ENCODE measurements at regions of chr7 and their contacts with region 1.

Region 1: GRCh38 chr7:24701261-24702235 is 55.7 kb downstream of the GSDME start:
- DNase-seq: peak in 1 of 2 experiments; percentile 33
- H3K4me3 ChIP-seq: no peak overlapping the region
- H3K27ac ChIP-seq: no peak overlapping the region
- H3K4me1 ChIP-seq: peaks cover under 1 to 11% (median 4%) of the 10 kb centered on the region in 4 experiments; a peak in 5 of 7 replicates
- H3K27me3 ChIP-seq: no peaks in the 10 kb centered on the region
- CTCF ChIP-seq: no peak
- EP300 ChIP-seq: no peak
- POLR2A ChIP-seq: no peak
- RAD21 ChIP-seq: no peak

Region 2: DNA sequence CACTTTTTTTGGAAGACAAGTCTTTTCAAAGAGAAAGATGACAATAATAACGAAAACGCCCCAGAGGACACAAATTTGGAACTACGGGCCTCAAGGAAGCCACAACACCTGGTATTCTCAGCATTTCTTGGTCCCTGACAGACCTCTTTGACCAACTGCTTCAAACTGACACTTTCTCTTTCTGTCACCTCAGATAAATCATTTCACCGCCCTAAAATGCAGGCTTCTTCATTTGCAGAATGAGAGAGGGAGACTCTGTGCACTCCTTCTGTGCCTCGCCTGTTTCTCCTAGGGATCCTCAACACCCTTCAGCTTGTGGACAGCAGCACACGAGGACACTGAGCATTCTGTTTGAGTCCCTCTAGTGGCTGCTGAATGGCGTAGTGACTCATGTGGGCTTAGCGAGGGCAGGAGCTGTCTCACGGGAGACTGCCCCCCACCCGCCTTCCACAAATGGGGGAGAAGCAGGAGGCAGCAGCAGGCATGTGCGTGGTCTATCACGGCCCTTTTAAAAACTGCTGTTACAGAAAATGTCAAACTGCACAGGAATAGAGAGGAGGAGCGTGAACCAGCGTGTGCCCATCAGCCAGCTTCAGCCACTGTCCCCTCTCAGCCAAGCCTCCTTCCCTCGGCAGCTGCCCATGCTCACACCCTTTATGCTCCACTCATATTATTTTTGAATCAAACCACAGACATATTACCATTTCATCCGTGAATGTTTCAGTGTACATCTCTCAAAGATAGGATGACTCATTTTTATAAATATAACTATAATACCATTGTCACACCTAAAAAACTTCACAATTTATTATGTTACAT is 14.3 kb after region 1 on chr7:
- CTCF ChIA-PET with region 1: interaction called, 69 read pairs
- POLR2A ChIA-PET with region 1: interaction called, 3 read pairs
- DNase-seq: peak in 1 of 2 experiments; percentile 56
- H3K4me3 ChIP-seq: no peak overlapping the region
- H3K27ac ChIP-seq: no peak overlapping the region
- H3K4me1 ChIP-seq: no peaks in the 10 kb centered on the region; a peak in 2 of 7 replicates
- H3K27me3 ChIP-seq: no peaks in the 10 kb centered on the region
- CTCF ChIP-seq: peak; percentile 59 to 85 (median 74)
- EP300 ChIP-seq: no peak
- POLR2A ChIP-seq: no peak
- RAD21 ChIP-seq: peak; percentile 66 to 74

Region 3: DNA sequence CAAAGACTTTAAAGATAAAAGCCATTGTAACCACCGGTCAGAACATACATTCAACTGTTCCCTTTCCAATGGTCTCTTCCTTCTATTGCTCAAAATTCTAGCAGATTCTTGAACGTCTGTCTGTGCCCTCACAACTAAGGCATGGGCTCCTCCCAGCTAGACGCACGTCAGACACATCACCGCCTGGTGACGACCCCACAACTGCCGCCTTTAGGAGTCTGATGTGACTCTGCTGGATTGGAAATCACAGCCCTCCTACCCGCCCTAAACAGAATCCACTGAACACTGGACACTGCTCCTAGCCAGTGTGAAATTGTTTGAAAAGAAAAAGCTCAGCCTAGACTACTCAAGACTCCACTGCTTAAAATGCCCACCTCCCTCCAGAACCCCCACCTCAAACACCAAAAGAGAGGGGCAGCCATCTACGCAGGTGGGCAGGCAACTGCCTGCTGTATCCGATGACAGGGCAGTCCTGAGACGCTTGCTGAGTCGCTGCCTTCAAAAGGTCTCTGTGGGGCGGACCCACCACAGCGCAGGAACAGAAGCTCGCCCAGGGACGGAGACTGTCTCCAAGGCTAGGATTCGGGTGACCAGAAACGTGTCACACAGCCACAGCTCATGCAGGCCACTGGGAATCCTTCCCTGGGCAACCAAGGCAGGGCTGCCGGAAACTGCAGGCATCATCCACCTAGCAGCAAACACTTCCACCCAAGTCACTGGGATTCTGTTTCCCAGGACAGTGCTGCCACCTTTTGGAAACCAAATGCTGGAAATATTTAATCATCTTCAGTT is 21.0 kb after region 1 on chr7:
- CTCF ChIA-PET with region 1: interaction called, 69 read pairs
- POLR2A ChIA-PET with region 1: no interaction called
- DNase-seq: peak in 1 of 2 experiments; percentile 54
- H3K4me3 ChIP-seq: no peak overlapping the region
- H3K27ac ChIP-seq: no peak overlapping the region
- H3K4me1 ChIP-seq: peaks cover 7 to 24% (median 13%) of the 10 kb centered on the region in 4 experiments
- H3K27me3 ChIP-seq: no peaks in the 10 kb centered on the region; a peak in 1 of 7 replicates
- CTCF ChIP-seq: peak in 2 of 3 experiments; percentile 61 to 64; a peak in 3 of 4 replicates
- EP300 ChIP-seq: no peak
- POLR2A ChIP-seq: no peak
- RAD21 ChIP-seq: peak; percentile 78 to 82

Measured in H1 (cell line).